ENCODE measurements at regions of chr7 and their contacts with region 1.

Region 1: DNA sequence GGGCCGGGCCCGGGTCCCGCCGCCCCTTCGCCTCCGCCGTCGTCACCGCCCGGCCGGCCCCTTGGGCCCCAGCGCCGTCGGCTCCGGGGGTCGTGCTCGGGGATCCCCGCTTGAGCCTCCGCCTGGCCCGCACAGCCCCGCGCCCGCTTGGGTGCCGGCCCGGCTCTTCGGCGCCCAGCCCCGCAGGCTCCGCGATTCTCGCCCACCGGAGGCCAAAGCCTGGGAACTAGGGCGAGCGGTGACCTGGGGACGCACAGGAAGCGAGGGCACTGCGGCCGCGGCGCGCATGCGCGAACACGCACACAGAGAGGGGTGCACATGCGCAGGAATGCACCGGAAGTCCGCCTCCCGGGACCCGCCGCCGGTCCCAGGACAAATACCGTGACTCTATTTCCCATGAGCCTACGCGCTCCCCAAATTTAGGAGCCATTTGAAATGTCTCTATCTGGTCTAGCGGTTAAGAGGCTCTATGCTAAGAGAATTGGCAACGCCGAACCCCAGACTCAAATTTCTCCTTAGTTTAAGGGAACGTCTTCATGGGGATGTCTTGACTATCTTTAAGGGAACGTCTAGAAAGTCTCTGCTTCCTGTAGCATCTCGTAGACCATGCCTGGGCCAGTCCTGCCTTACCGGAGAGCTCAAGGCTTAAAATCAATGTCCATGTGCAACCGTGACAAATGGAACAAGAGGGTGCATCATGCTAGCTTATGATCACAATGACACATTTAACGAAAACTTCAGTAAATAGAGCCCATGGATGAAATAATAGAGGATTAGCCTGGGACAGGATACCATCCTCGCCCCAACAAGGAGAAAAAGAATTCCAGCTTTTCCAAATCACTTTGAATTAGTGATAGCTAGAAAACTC is at the start of gene ZNF12:
- DNase-seq: peak; percentile 85 to 98 (median 96)
- ATAC-seq: peak; percentile 88
- H3K4me3 ChIP-seq: peak within 1 kb of the TSS; percentile 65 to 75
- H3K4me3 Mint-ChIP-seq: peak within 1 kb of the TSS; percentile 92
- H3K27ac ChIP-seq: peak within 1 kb of the TSS; percentile 73 to 86
- H3K27ac Mint-ChIP-seq: peak within 1 kb of the TSS; percentile 91
- H3K4me1 ChIP-seq: peaks cover 26% of the 10 kb centered on the region
- H3K4me1 Mint-ChIP-seq: peaks cover 42% of the 10 kb centered on the region
- H3K27me3 ChIP-seq: peaks cover 0 to 4% of the 10 kb centered on the region in 2 experiments
- H3K27me3 Mint-ChIP-seq: peaks cover 2% of the 10 kb centered on the region
- CTCF ChIP-seq: no peak
- total RNA-seq, gene ZNF12: 19.5 to 23.1 TPM

Region 2: DNA sequence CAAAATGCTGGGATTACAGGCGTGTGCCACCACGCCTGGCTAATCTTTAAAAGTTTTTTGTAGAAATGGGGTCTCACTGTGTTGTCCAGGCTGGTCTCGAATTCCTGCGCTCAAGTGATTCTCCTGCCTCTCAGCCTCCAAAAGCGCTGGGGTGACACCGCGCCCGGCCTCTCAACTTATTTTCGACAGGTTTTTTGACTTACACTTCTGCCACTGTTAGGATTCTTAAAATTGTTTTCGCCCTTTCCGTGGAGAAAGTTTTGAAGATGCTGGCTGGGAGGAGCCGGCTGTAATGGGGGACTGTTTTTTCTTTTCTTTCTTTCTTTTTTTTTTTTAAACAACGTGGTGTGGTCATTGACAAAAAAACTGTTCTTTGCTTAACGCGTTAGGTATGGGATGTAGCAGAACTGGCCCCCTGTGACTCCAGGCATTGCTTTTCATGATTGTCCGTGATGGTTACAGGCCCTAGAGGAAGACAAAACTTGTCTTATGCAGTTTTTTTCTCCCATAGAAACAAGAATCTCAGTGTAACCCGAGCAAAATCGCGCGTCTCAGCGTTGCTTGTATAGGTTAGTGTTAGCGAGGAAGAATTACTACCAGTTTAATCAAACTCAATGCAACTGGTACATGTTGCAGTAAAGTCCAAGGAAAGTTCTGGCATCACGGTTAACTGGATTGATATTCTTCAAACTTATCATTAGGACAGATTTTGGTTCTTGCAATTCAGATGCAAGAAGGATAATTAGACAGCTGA is 331.4 kb before region 1 on chr7:
- CTCF ChIA-PET with region 1: no interaction called
- POLR2A ChIA-PET with region 1: no interaction called
- intact Hi-C with region 1: no loop called
- DNase-seq: peak in 6 of 9 experiments; percentile 15 to 64 (median 43)
- ATAC-seq: peak; percentile 16
- H3K4me3 ChIP-seq: peak overlapping the region; percentile 62 to 71
- H3K4me3 Mint-ChIP-seq: peak overlapping the region; percentile 93
- H3K27ac ChIP-seq: peak overlapping the region; percentile 76 to 80
- H3K27ac Mint-ChIP-seq: peak overlapping the region; percentile 95
- H3K4me1 ChIP-seq: peaks cover 29% of the 10 kb centered on the region
- H3K4me1 Mint-ChIP-seq: peaks cover 36% of the 10 kb centered on the region
- H3K27me3 ChIP-seq: no peaks in the 10 kb centered on the region
- H3K27me3 Mint-ChIP-seq: no peaks in the 10 kb centered on the region
- CTCF ChIP-seq: no peak

Region 3: DNA sequence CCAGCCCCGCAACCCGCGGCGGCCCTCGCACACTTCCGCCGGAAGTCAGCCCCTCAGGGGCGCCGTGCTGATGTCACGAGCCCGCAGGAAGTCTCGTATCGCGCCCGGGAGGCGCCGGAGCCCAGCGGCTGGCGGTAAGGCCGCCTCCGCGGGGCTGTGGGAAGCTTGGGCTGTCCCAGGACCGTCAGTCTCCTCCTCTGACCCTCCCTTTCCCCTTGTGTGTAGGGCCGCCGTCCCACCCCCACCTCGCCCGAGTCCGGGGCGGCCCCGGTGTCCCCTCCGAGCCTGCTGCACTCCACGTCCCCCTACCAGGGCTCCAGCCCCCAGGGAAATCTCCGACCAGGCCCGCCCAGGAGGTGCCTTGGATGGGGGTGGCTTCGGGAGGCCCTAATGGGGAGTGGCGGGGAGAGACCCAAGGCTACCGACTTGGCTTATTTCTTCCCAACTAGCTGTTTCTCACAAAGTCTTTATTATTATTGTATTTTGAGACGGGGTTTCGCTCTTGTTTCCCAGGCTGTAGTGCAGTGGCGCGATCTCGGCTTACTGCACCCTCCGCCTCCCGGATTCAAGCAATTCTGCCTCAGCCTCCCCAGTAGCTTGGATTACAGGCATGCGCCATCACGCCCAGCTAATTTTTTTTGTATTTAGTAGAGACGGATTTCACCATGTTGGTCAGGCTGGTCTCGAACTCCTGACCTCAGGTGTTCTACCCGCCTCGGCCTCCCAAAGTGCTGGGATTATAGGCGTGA is 129.4 kb before region 1 on chr7 and contains the start of gene ZDHHC4:
- CTCF ChIA-PET with region 1: no interaction called
- POLR2A ChIA-PET with region 1: no interaction called
- intact Hi-C with region 1: loop called in 1 of 2 experiments (anchors 5 kb)
- DNase-seq: peak; percentile 75 to 95 (median 87)
- ATAC-seq: peak; percentile 90
- H3K4me3 ChIP-seq: peak within 1 kb of the TSS; percentile 83 to 90
- H3K4me3 Mint-ChIP-seq: peak within 1 kb of the TSS; percentile 86
- H3K27ac ChIP-seq: peak within 1 kb of the TSS; percentile 91 to 97
- H3K27ac Mint-ChIP-seq: peak within 1 kb of the TSS; percentile 94
- H3K4me1 ChIP-seq: peaks cover 4% of the 10 kb centered on the region
- H3K4me1 Mint-ChIP-seq: peaks cover 14% of the 10 kb centered on the region
- H3K27me3 ChIP-seq: no peaks in the 10 kb centered on the region
- H3K27me3 Mint-ChIP-seq: peaks cover 2% of the 10 kb centered on the region
- CTCF ChIP-seq: no peak
- total RNA-seq, gene ZDHHC4: 35.6 to 37.0 TPM

Region 4: GRCh38 chr7:6589829-6590644 is 116.9 kb before region 1 on chr7 and contains the start of gene INTS15:
- CTCF ChIA-PET with region 1: no interaction called
- POLR2A ChIA-PET with region 1: no interaction called
- intact Hi-C with region 1: loop called (anchors 1 kb)
- DNase-seq: peak; percentile 66 to 93 (median 82)
- ATAC-seq: peak; percentile 90
- H3K4me3 ChIP-seq: peak within 1 kb of the TSS; percentile 64 to 93
- H3K4me3 Mint-ChIP-seq: peak within 1 kb of the TSS; percentile 89
- H3K27ac ChIP-seq: peak within 1 kb of the TSS; percentile 69 to 83
- H3K27ac Mint-ChIP-seq: peak within 1 kb of the TSS; percentile 94
- H3K4me1 ChIP-seq: peaks cover 24% of the 10 kb centered on the region
- H3K4me1 Mint-ChIP-seq: peaks cover 21% of the 10 kb centered on the region
- H3K27me3 ChIP-seq: no peaks in the 10 kb centered on the region
- H3K27me3 Mint-ChIP-seq: no peaks in the 10 kb centered on the region
- CTCF ChIP-seq: peak; percentile 56
- total RNA-seq, gene INTS15: 48.8 to 52.3 TPM

Region 5: GRCh38 chr7:6637544-6638229 is 69.2 kb before region 1 on chr7:
- CTCF ChIA-PET with region 1: no interaction called
- POLR2A ChIA-PET with region 1: no interaction called
- intact Hi-C with region 1: loop called in 1 of 2 experiments (anchors 2 kb)
- DNase-seq: peak; percentile 16 to 83 (median 68)
- ATAC-seq: peak; percentile 79
- H3K4me3 ChIP-seq: peak overlapping the region; percentile 53 to 59
- H3K4me3 Mint-ChIP-seq: peak overlapping the region; percentile 78
- H3K27ac ChIP-seq: peak overlapping the region; percentile 42 to 66
- H3K27ac Mint-ChIP-seq: peak overlapping the region; percentile 84
- H3K4me1 ChIP-seq: peaks cover 16% of the 10 kb centered on the region
- H3K4me1 Mint-ChIP-seq: peaks cover 28% of the 10 kb centered on the region
- H3K27me3 ChIP-seq: no peaks in the 10 kb centered on the region
- H3K27me3 Mint-ChIP-seq: no peaks in the 10 kb centered on the region
- CTCF ChIP-seq: peak; percentile 23

Region 6: GRCh38 chr7:6729492-6730342 is 22.8 kb after region 1 on chr7:
- CTCF ChIA-PET with region 1: interaction called, 3 read pairs
- POLR2A ChIA-PET with region 1: no interaction called
- intact Hi-C with region 1: loop called (anchors 1 kb)
- DNase-seq: peak; percentile 51 to 93 (median 81)
- ATAC-seq: peak; percentile 90
- H3K4me3 ChIP-seq: peak overlapping the region; percentile 85 to 99
- H3K4me3 Mint-ChIP-seq: peak overlapping the region; percentile 92
- H3K27ac ChIP-seq: peak overlapping the region; percentile 73 to 79
- H3K27ac Mint-ChIP-seq: peak overlapping the region; percentile 86
- H3K4me1 ChIP-seq: peaks cover 16% of the 10 kb centered on the region
- H3K4me1 Mint-ChIP-seq: peaks cover 30% of the 10 kb centered on the region
- H3K27me3 ChIP-seq: no peaks in the 10 kb centered on the region
- H3K27me3 Mint-ChIP-seq: no peaks in the 10 kb centered on the region
- CTCF ChIP-seq: no peak

Region 7: GRCh38 chr7:6831018-6831725 is 124.3 kb after region 1 on chr7:
- CTCF ChIA-PET with region 1: no interaction called
- POLR2A ChIA-PET with region 1: no interaction called
- intact Hi-C with region 1: loop called in 1 of 2 experiments (anchors 10 kb)
- DNase-seq: no peak
- ATAC-seq: no peak
- H3K4me3 ChIP-seq: no peak overlapping the region
- H3K4me3 Mint-ChIP-seq: no peak overlapping the region
- H3K27ac ChIP-seq: no peak overlapping the region
- H3K27ac Mint-ChIP-seq: no peak overlapping the region
- H3K4me1 ChIP-seq: no peaks in the 10 kb centered on the region
- H3K4me1 Mint-ChIP-seq: peaks cover 3% of the 10 kb centered on the region
- H3K27me3 ChIP-seq: no peaks in the 10 kb centered on the region
- H3K27me3 Mint-ChIP-seq: peaks cover 27% of the 10 kb centered on the region
- CTCF ChIP-seq: no peak

Region 8: GRCh38 chr7:7566651-7567611 is 860.0 kb after region 1 on chr7 and contains the start of gene MIOS:
- CTCF ChIA-PET with region 1: no interaction called
- POLR2A ChIA-PET with region 1: no interaction called
- intact Hi-C with region 1: loop called (anchors 5 to 10 kb)
- DNase-seq: peak; percentile 65 to 92 (median 77)
- ATAC-seq: peak; percentile 90
- H3K4me3 ChIP-seq: peak within 1 kb of the TSS; percentile 62 to 73
- H3K4me3 Mint-ChIP-seq: peak within 1 kb of the TSS; percentile 78
- H3K27ac ChIP-seq: peak within 1 kb of the TSS; percentile 83
- H3K27ac Mint-ChIP-seq: peak within 1 kb of the TSS; percentile 92
- H3K4me1 ChIP-seq: peaks cover 34% of the 10 kb centered on the region
- H3K4me1 Mint-ChIP-seq: peaks cover 35% of the 10 kb centered on the region
- H3K27me3 ChIP-seq: no peaks in the 10 kb centered on the region
- H3K27me3 Mint-ChIP-seq: no peaks in the 10 kb centered on the region
- CTCF ChIP-seq: no peak
- total RNA-seq, gene MIOS: 35.1 to 36.8 TPM

Measured in CD8-positive, alpha-beta T cell (primary cell).